ENCODE measurements at regions of chr10 and their contacts with region 1.

Region 1: DNA sequence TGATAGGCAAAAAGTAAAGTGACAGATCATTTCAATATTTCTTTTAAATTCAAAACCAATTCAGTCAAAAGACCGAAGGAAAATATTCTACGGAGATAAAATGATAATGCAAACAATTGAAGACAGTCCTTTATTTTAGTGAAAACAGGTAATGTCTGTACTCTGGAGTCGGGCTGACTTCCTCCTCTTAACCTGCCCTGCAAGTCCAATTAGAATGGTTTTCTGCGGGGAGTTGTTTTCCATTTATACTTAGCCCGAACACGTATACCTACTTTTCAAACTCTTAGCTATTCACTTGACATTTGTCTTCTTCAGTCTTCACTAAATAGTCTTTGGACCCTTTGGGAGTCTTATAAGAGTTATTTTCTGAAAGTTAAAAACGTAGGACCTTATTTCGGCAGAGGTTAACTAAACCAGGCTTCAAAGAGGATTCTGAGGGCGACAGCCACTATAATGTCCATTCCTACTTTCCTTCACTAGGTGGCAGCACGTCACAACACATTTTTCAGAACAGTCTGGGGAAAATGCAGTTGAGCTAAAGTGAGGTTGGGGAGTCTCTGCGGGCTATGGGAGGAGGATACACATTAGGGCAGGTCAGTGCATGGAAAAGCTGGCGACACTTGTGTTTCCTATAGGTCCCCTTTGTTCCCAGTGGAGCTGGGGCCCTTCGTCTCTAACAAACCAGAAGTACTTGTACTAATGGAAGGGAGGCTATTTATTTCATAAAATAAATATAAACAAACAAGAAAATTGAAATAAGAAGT is 472.0 kb downstream of the KCNMA1 start:
- DNase-seq: peak; percentile 100
- ATAC-seq: peak; percentile 16
- H3K4me3 ChIP-seq: peak overlapping the region; percentile 43
- H3K27ac ChIP-seq: no peak overlapping the region; the same call in 1 of the 2 replicates
- H3K4me1 ChIP-seq: peaks cover 32% of the 10 kb centered on the region
- H3K27me3 ChIP-seq: no peaks in the 10 kb centered on the region
- CTCF ChIP-seq: no peak

Region 2: GRCh38 chr10:76925636-76926405 is 239.8 kb before region 1 on chr10:
- CTCF ChIA-PET with region 1: no interaction called
- POLR2A ChIA-PET with region 1: no interaction called
- intact Hi-C with region 1: no loop called
- DNase-seq: no peak
- ATAC-seq: no peak
- H3K4me3 ChIP-seq: no peak overlapping the region
- H3K27ac ChIP-seq: no peak overlapping the region
- H3K4me1 ChIP-seq: no peaks in the 10 kb centered on the region
- H3K27me3 ChIP-seq: no peaks in the 10 kb centered on the region
- CTCF ChIP-seq: no peak

Region 3: DNA sequence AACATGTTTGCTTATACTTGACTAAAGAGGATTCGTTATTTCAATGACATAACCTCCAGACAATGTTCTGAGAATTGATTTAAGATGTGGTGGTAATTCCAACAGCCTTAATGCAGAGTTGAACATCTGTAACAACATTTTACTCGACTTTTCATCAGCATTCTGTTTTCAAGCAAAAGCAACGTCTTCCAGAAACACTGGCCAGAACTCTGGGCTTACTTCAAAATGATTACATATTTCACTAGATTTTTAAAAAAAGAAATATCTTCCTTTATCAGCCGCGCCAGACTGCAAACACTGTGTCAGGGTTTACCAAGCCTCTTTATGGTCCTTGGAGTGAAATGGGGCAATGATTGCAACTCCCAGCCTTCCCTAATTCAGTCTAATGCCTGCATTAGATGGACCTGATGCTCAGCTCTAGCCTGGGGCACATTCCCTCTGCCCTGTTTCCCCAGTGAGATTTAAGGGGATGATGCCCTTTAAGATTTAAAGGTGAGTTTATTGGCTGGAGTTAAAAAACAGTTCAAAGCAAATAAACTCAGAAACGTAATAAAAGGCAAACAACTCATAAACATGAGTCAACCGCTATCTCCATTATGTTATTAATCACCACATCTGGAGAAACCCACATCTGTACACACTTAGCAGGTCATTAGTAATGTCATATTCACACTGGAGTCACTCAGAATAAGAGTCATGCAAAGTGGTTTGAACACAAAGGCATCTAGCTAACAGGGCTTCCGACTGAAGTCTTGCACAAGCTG is 191.9 kb before region 1 on chr10:
- CTCF ChIA-PET with region 1: no interaction called
- POLR2A ChIA-PET with region 1: no interaction called
- intact Hi-C with region 1: loop called (anchors 5 kb)
- DNase-seq: peak; percentile 99
- ATAC-seq: peak; percentile 95
- H3K4me3 ChIP-seq: no peak overlapping the region
- H3K27ac ChIP-seq: 0 out of 2 replicates have a peak overlapping the region, but pooled peaks have one; percentile 1
- H3K4me1 ChIP-seq: peaks cover 20% of the 10 kb centered on the region
- H3K27me3 ChIP-seq: no peaks in the 10 kb centered on the region
- CTCF ChIP-seq: no peak

Region 4: DNA sequence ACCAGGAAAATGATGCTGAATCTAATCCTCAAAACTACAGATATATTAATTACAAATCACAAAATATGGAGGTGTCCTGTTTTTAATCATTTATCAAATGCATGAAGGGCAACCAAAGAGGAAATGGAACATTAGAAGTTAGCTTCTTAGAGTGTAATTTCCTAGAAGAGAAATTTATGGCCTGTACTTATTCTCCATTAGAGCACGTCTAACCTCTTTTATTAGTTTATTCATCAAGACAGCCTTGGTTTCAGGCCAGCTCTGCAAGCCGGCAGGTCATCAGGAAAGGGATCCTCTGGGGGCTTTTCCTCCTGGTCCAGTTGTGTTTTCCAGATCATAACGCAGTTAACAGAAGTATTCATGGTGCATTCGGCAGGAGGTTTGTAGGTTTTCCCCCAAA is 45.6 kb before region 1 on chr10:
- CTCF ChIA-PET with region 1: no interaction called
- POLR2A ChIA-PET with region 1: no interaction called
- intact Hi-C with region 1: loop called (anchors 1 kb)
- DNase-seq: peak; percentile 52
- ATAC-seq: peak; percentile 69
- H3K4me3 ChIP-seq: no peak overlapping the region
- H3K27ac ChIP-seq: no peak overlapping the region
- H3K4me1 ChIP-seq: peaks cover 21% of the 10 kb centered on the region
- H3K27me3 ChIP-seq: no peaks in the 10 kb centered on the region
- CTCF ChIP-seq: no peak

Region 5: DNA sequence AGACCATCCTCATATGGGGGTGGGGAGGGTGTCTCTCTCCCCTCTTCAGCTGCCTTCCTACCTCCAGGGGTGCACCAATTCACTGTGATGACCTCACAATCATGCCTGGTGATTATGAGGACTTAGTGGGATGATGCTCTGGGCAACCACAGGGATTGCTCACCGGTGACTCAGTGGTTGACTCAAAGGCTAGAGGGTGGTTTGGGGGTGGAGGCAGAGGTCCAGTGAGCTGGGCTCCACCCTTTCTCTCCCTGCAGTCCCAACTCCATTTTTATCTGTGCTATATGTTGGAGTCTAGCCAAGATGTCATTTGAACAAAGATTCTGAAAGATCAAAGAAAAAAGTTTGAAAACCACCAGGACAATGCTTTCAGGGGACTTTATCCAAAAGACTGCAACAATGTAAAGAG is 185.1 kb after region 1 on chr10:
- CTCF ChIA-PET with region 1: interaction called, 14 read pairs
- POLR2A ChIA-PET with region 1: interaction called, 4 read pairs
- intact Hi-C with region 1: loop called (anchors 2 kb)
- DNase-seq: peak; percentile 100
- ATAC-seq: peak; percentile 96
- H3K4me3 ChIP-seq: 0 out of 2 replicates have a peak overlapping the region, but pooled peaks have one; percentile 0
- H3K27ac ChIP-seq: peak overlapping the region; percentile 77
- H3K4me1 ChIP-seq: peaks cover 52% of the 10 kb centered on the region
- H3K27me3 ChIP-seq: no peaks in the 10 kb centered on the region
- CTCF ChIP-seq: 0 out of 2 replicates have a peak, but pooled peaks have one; percentile 18

Region 6: GRCh38 chr10:77504873-77505257 is 339.2 kb after region 1 on chr10:
- CTCF ChIA-PET with region 1: interaction called, 7 read pairs
- POLR2A ChIA-PET with region 1: no interaction called
- intact Hi-C with region 1: loop called (anchors 2 kb)
- DNase-seq: peak; percentile 100
- ATAC-seq: peak; percentile 48
- H3K4me3 ChIP-seq: peak overlapping the region; percentile 15; the same call in 1 of the 2 replicates
- H3K27ac ChIP-seq: peak overlapping the region; percentile 82
- H3K4me1 ChIP-seq: peaks cover 80% of the 10 kb centered on the region
- H3K27me3 ChIP-seq: no peaks in the 10 kb centered on the region
- CTCF ChIP-seq: peak; percentile 90

Region 7: DNA sequence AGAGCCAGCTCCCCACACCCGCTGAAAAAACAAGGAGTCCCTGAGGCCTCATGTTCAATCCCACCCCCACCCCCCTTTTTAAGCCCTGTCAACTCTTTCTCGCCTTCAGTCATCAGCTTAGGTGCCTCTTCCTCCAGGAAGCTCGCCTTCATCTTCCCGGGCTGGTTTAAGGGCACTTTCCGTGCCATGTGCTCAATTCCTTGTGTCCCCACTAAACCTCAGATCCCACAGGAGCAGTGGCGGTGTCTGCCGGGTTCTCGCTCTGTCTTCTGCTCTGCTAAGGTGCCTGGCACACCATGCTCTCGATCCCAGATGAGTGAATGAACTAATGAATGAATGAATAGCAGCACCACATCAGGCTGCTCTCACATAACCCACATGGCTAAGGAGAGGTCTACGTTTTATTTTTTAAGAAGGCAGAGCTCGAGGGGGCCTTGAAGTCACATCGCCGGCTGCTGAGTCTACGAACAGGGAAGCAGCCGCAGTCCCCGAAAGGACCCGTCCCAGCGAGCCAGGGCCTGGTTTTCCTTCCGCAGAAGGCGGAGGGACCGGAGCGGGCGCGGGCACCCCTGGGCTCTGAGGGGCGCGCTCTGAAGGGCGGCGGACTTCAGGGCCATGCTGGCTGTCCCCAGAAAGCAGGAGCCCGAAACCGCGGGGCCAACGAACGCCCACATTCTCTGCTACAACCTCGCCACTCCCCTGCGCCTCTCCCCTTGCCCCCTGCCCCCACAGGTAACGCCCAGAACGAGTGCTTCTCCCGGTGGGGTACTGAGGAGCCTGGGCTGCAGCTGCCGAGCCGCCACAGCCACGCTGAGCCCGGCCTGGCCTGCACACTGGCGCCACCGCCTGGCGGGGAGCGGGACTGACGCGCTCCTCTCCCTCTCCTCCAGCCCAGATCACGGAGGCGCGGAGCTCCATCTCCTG is 545.4 kb after region 1 on chr10:
- CTCF ChIA-PET with region 1: interaction called, 34 read pairs
- POLR2A ChIA-PET with region 1: interaction called, 3 read pairs
- intact Hi-C with region 1: loop called (anchors 1 kb)
- DNase-seq: peak; percentile 97
- ATAC-seq: peak; percentile 98
- H3K4me3 ChIP-seq: peak overlapping the region; percentile 57
- H3K27ac ChIP-seq: no peak overlapping the region
- H3K4me1 ChIP-seq: peaks cover 10% of the 10 kb centered on the region; the same call in 1 of the 2 replicates
- H3K27me3 ChIP-seq: no peaks in the 10 kb centered on the region
- CTCF ChIP-seq: peak; percentile 100

Region 8: DNA sequence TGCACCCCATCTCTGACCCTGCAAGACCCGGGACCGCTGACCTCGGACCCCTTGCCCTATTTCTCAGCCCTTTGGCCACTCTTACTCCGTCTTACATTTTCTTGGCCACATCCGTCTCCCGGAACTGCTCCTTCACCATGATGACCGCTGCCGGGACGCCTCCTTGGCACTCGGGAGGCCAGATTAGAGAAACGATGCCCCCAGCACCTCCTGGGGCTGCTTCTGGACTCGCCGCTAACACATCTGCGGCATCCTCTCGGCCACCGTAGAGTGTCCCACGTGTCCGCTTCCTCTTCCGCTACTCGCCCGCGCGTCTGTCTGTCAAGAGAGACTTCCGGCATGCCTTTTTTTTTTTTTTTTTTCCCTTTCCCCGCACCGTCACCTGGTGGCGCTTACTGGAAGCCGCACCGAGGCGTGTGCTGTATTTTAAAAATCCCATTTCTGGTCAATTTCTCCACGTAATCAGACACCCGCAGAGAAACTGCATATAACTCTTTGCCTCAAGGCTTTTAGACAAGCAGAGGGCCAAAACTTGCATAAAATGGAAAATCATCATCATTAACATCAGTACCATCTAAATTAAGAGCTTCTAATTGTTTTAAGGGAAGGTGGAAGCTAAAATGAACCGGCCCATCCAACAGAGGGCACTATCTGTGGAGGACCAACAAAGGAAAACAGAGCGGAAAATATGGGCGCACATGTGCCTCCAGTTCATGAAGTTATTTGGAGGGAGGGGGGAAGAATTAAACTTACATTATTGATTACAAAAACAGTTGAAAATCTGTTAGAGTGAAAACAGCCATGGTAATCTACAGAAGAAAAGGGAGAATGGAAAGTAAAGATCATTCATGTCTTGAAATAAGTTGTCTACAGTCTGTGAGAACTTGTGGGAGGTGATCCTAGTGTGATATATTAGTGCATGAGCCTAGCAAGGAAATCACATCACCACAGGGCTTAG is 863.9 kb after region 1 on chr10 and contains the start of gene POLR3A:
- CTCF ChIA-PET with region 1: no interaction called
- POLR2A ChIA-PET with region 1: no interaction called
- intact Hi-C with region 1: loop called (anchors 5 kb)
- DNase-seq: peak; percentile 100
- ATAC-seq: peak; percentile 48
- H3K4me3 ChIP-seq: peak within 1 kb of the TSS; percentile 69
- H3K27ac ChIP-seq: peak within 1 kb of the TSS; percentile 23
- H3K4me1 ChIP-seq: peaks cover 47% of the 10 kb centered on the region
- H3K27me3 ChIP-seq: no peaks in the 10 kb centered on the region
- CTCF ChIP-seq: peak; percentile 100
- total RNA-seq, gene POLR3A: 97.0 and 97.2 TPM in 2 replicates

Region 9: GRCh38 chr10:78231939-78232338 is 1066.3 kb after region 1 on chr10:
- CTCF ChIA-PET with region 1: no interaction called
- POLR2A ChIA-PET with region 1: no interaction called
- intact Hi-C with region 1: no loop called
- DNase-seq: peak; percentile 79
- ATAC-seq: peak; percentile 71
- H3K4me3 ChIP-seq: no peak overlapping the region
- H3K27ac ChIP-seq: no peak overlapping the region
- H3K4me1 ChIP-seq: no peaks in the 10 kb centered on the region
- H3K27me3 ChIP-seq: peaks cover 71% of the 10 kb centered on the region
- CTCF ChIP-seq: peak; percentile 96